ENCODE measurements at regions of chr6 and their contacts with region 1.

Region 1: GRCh38 chr6:100246206-100246605 is 218.5 kb downstream of the SIM1 start:
- DNase-seq: no peak
- H3K4me3 ChIP-seq: no peak overlapping the region
- H3K4me3 Mint-ChIP-seq: no peak overlapping the region
- H3K27ac Mint-ChIP-seq: no peak overlapping the region
- H3K4me1 ChIP-seq: peaks cover 30% of the 10 kb centered on the region
- H3K4me1 Mint-ChIP-seq: peaks cover 13% of the 10 kb centered on the region
- H3K27me3 ChIP-seq: no peaks in the 10 kb centered on the region
- H3K27me3 Mint-ChIP-seq: no peaks in the 10 kb centered on the region
- CTCF ChIP-seq: no peak

Region 2: DNA sequence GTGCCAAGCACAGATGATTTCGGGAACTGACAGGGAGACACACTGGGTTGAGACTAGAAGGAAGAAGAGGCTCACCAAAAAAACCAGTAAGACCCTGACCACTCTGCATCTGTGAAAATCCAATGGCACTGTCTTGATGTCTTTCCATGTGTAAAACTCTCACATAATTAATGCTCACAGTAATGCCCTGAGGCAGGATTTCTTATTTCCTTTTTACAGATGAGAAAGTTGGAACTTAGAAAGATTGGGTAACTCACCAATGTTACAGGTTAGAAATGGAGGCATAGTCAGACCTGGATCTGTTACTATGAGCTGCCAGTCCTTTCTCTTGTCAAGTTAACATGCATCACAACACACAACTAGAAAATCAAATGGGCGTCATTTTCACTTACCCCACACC is 101.2 kb before region 1 on chr6:
- CTCF ChIA-PET with region 1: no interaction called
- POLR2A ChIA-PET with region 1: no interaction called
- intact Hi-C with region 1: loop called (anchors 10 kb)
- DNase-seq: no peak
- H3K4me3 ChIP-seq: no peak overlapping the region
- H3K4me3 Mint-ChIP-seq: no peak overlapping the region
- H3K27ac Mint-ChIP-seq: no peak overlapping the region
- H3K4me1 ChIP-seq: no peaks in the 10 kb centered on the region
- H3K4me1 Mint-ChIP-seq: peaks cover 6% of the 10 kb centered on the region
- H3K27me3 ChIP-seq: no peaks in the 10 kb centered on the region
- H3K27me3 Mint-ChIP-seq: no peaks in the 10 kb centered on the region
- CTCF ChIP-seq: no peak

Region 3: DNA sequence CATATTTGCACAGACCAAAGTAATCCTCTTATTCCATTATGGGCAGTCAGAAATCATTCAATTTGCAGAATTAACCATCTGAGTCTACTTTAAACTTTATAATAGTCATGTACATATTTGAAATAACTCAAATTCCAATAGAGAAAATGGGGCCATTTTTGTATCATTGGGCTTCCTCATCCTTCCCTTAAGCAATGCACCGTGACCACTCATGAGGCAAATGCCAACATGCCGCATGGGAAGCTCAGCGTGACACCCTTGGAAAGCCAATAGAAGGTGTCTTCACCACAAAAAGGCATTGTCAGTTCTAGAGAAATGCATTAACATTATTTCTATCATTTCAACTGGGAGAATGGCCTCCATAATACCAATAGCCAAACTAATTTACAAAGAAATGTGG is 180.0 kb after region 1 on chr6:
- CTCF ChIA-PET with region 1: no interaction called
- POLR2A ChIA-PET with region 1: no interaction called
- intact Hi-C with region 1: no loop called
- DNase-seq: no peak
- H3K4me3 ChIP-seq: no peak overlapping the region
- H3K4me3 Mint-ChIP-seq: no peak overlapping the region
- H3K27ac Mint-ChIP-seq: no peak overlapping the region
- H3K4me1 ChIP-seq: peaks cover 2% of the 10 kb centered on the region; the same call in 1 of the 2 replicates
- H3K4me1 Mint-ChIP-seq: no peaks in the 10 kb centered on the region
- H3K27me3 ChIP-seq: no peaks in the 10 kb centered on the region
- H3K27me3 Mint-ChIP-seq: peaks cover 2% of the 10 kb centered on the region
- CTCF ChIP-seq: no peak